AG04450 (cell line): ENCODE measurements at regions of chr7 and their contacts with region 1.

Region 1: DNA sequence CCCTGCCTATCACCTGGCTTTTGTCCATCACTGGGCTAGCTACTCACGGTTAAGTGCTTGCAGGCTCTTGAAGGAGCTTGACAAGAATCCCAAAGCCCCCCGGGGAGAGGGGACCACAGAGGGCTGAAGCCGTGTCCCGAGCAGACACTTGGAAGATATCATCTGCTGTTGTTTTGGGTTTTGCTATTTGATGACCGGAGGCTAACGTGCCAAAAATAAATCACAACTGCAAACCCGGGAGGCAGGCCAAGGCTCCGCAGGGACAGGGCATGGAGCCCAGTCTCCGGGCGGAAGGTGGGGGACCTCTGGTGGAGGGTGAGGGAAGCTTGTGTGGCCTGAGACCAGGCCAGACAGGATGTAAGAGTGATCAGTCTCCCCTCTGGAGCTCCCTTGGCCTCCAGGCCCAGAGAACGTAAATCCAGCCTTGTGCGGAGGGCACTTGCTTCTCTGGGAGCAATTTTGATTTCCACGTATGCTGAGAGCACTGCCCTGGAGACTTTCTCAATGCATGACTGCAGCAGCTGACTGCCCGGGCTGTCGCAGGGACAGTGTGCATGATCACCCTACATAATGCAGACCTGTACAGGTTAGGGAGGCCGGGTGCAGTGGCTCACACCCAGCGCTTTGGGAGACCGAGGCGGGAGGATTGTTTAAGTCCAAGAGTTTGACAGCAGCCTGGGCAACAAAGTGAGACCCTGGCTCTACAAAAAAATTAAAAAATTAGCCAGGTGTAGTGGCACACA is at the start of gene PHKG1:
- DNase-seq: peak; percentile 50
- H3K4me3 ChIP-seq: no peak within 1 kb of the TSS
- H3K27ac ChIP-seq: peak within 1 kb of the TSS; percentile 39
- H3K27me3 ChIP-seq: no peaks in the 10 kb centered on the region
- CTCF ChIP-seq: peak; percentile 21; the same call in 1 of the 2 replicates
- polyA plus RNA-seq, gene PHKG1: 0.20 and 0.26 TPM in 2 replicates

Region 2: GRCh38 chr7:55641273-55641691 is 451.7 kb before region 1 on chr7:
- CTCF ChIA-PET with region 1: interaction called, 10 read pairs
- POLR2A ChIA-PET with region 1: no interaction called
- DNase-seq: peak; percentile 53
- H3K4me3 ChIP-seq: no peak overlapping the region
- H3K27ac ChIP-seq: no peak overlapping the region
- H3K27me3 ChIP-seq: no peaks in the 10 kb centered on the region
- CTCF ChIP-seq: peak; percentile 79

Region 3: DNA sequence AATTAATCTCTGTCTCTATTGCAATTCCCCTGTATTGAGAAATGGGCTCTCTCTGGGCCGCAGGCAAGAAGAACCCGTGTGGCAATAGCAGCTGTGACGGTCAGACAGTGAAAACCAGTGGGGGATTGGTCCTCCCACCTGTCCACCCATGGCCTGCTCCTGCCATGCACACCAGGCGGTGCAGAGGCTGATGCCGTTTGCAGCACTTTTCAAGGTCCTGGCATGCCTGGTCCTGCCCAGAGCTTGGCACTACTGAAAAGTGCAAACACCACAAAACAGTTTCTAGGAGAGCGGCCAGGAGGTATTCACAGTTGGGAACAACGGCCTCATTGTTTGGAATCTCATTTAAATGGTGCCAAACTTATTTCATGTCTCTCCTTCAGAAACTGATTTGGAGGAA is 83.3 kb before region 1 on chr7:
- CTCF ChIA-PET with region 1: interaction called, 10 read pairs
- POLR2A ChIA-PET with region 1: no interaction called
- DNase-seq: no peak
- H3K4me3 ChIP-seq: no peak overlapping the region
- H3K27ac ChIP-seq: no peak overlapping the region
- H3K27me3 ChIP-seq: no peaks in the 10 kb centered on the region
- CTCF ChIP-seq: no peak

Region 4: GRCh38 chr7:56079450-56080185 is 13.3 kb before region 1 on chr7:
- CTCF ChIA-PET with region 1: interaction called, 23 read pairs
- POLR2A ChIA-PET with region 1: interaction called, 3 read pairs
- DNase-seq: no peak
- H3K4me3 ChIP-seq: no peak overlapping the region
- H3K27ac ChIP-seq: peak overlapping the region; percentile 31
- H3K27me3 ChIP-seq: no peaks in the 10 kb centered on the region
- CTCF ChIP-seq: peak; percentile 89

Region 5: DNA sequence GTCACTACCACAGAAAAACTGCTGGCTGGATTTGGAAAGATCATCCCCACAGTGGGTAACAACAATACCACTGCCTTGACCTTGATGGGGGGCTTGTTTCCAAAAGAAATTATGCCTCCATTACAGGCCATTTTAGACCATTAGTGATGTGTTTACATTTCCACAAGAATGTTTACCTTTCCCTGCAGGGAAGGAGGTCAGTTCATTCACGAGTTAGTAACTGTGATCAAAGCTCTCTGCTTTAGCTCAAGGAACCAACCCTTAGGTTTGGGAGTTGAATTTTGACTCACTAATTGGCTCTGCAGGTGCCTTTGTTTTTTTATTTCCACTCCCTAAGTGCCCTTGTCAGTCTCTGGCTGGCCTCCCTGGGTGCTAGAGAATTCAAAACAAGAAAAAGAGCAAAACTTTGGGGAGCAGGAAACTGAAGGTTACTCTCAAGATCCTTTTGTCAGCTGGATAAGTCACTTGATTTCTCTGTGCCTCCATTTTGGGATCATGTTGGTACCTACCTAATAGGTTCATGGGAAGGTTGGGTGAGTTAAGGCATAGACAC is 64.4 kb after region 1 on chr7:
- CTCF ChIA-PET with region 1: no interaction called
- POLR2A ChIA-PET with region 1: no interaction called
- DNase-seq: no peak
- H3K4me3 ChIP-seq: no peak overlapping the region
- H3K27ac ChIP-seq: no peak overlapping the region
- H3K27me3 ChIP-seq: no peaks in the 10 kb centered on the region
- CTCF ChIP-seq: no peak